ENCODE measurements at regions of chr19 and their contacts with region 1.

Region 1: DNA sequence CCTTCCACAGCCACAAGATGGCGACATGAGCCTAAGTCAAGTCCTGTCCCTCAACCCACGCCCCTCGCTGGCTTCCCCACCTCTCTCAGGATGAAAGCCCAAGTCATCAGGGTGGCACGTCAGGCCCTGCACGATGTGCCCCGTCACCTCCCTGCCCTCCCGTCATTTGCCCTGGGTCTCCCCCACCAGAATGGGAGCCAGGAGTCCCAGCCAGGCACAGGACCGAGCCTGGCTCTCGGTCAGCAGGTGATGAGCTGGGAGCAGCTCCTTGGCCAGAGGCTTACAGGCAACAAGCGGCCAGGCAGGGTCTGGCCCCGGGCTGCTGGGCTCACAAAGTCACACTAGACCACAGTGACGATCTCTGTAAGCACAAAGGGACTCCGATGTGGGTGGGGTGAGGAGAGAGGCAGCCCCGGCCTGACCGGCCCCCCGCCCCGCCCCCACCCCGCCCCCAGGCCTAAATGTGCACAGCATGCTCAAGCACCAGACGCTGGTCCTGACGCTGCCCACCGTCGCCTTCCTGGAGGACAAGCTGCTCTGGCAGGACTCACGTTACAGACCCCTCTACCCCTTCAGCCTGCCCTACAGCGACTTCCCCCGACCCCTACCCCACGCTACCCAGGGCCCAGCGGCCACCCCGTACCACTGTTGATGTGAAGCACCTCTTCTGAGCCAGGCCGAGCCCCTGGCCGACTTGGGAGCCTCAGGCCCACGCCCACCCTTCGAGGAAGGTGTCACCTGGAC is 7.3 kb downstream of the MRPL4 start:
- DNase-seq: peak in 3 of 4 donors; percentile 88 to 92 (median 92)
- ATAC-seq: peak; percentile 74
- H3K4me3 ChIP-seq: no peak overlapping the region
- H3K27ac ChIP-seq: peak overlapping the region; percentile 57 to 82
- H3K4me1 ChIP-seq: peaks cover 0 to 10% of the 10 kb centered on the region in 2 donors
- H3K27me3 ChIP-seq: no peaks in the 10 kb centered on the region
- CTCF ChIP-seq: peak; percentile 61 to 77

Region 2: GRCh38 chr19:10380313-10381102 is 121.2 kb after region 1 on chr19 and contains the start of gene TYK2:
- intact Hi-C with region 1: loop called in 1 of 2 experiments (anchors 5 kb)
- DNase-seq: peak; percentile 97 to 99 (median 98)
- ATAC-seq: peak; percentile 98
- H3K4me3 ChIP-seq: peak within 1 kb of the TSS; percentile 82 to 88
- H3K27ac ChIP-seq: peak within 1 kb of the TSS; percentile 76 to 95
- H3K4me1 ChIP-seq: peaks cover 0 to 46% of the 10 kb centered on the region in 2 donors
- H3K27me3 ChIP-seq: no peaks in the 10 kb centered on the region
- CTCF ChIP-seq: no peak
- polyA plus RNA-seq, gene TYK2: 120 to 185 (median 151) TPM

Region 3: GRCh38 chr19:10390652-10391286 is 131.4 kb after region 1 on chr19:
- intact Hi-C with region 1: loop called in 1 of 2 experiments (anchors 5 kb)
- DNase-seq: peak in 3 of 4 donors; percentile 65 to 82 (median 76)
- ATAC-seq: peak; percentile 86
- H3K4me3 ChIP-seq: no peak overlapping the region
- H3K27ac ChIP-seq: no peak overlapping the region
- H3K4me1 ChIP-seq: peaks cover 5 to 21% of the 10 kb centered on the region in 2 donors
- H3K27me3 ChIP-seq: no peaks in the 10 kb centered on the region
- CTCF ChIP-seq: peak; percentile 84 to 89